ENCODE measurements at regions of chr17 and their contacts with region 1.

Region 1: DNA sequence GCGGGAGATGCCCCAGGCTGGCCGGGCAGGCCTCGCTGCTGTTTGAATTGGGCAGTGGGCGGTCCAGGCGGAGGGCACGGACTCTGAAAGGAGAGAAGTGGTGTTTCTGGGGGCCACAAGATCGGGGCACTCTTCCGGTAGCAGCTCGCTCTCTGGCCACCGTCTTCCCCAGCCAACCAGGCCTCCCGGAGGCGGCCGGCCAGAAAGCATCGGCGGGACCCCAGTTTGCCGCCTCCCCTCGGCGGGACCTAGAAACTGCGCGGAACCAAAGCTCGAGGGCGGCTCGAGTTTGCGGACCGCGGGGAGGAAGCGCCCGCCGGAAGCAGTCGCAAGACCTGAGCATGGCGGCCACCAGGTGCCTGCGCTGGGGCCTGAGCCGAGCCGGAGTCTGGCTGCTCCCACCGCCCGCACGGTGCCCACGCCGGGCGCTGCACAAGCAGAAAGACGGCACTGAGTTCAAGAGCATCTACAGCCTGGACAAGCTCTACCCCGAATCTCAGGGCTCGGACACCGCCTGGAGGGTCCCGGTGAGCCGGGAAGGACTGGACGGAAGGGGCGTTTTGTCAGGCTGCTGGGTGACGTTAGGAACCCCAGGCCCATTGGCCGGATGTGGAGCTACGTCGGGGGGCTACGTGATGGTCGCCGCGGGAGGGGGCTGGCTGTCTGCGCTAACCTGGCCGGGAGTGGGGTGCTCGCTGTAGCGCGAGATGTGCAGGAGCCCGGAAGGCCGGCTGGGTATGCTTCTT is at the start of gene MRPL58:
- DNase-seq: peak; percentile 94
- CTCF ChIP-seq: peak; percentile 39

Region 2: GRCh38 chr17:74987418-74987908 is 25.1 kb before region 1 on chr17 and contains the start of gene CDR2L:
- CTCF ChIA-PET with region 1: interaction called, 11 read pairs
- POLR2A ChIA-PET with region 1: no interaction called
- DNase-seq: peak; percentile 94
- CTCF ChIP-seq: no peak

Region 3: DNA sequence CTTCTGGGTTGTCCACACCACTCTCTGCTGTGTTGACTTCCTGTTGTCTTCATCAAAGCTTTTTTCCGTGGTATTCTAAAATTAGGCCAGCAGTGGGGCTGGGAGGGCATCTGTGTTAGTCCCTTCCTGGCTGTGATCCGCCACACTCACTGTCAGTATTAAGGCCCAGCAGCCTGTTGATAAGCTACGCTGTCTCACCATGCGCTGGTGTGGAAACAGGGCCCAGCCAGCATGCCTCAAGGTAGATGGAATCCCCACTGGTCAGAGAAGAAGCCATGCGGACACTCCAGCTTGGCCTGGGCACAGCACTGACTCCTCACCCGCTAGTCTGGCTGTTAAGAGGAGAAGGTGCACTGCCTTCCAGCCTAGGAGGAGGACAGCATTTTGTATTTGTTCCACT is 13.7 kb before region 1 on chr17:
- CTCF ChIA-PET with region 1: interaction called, 28 read pairs
- POLR2A ChIA-PET with region 1: interaction called, 4 read pairs
- DNase-seq: no peak
- CTCF ChIP-seq: no peak

Region 4: GRCh38 chr17:75024686-75025397 is 12.3 kb after region 1 on chr17:
- CTCF ChIA-PET with region 1: interaction called, 18 read pairs
- POLR2A ChIA-PET with region 1: no interaction called
- DNase-seq: no peak
- CTCF ChIP-seq: no peak

Region 5: DNA sequence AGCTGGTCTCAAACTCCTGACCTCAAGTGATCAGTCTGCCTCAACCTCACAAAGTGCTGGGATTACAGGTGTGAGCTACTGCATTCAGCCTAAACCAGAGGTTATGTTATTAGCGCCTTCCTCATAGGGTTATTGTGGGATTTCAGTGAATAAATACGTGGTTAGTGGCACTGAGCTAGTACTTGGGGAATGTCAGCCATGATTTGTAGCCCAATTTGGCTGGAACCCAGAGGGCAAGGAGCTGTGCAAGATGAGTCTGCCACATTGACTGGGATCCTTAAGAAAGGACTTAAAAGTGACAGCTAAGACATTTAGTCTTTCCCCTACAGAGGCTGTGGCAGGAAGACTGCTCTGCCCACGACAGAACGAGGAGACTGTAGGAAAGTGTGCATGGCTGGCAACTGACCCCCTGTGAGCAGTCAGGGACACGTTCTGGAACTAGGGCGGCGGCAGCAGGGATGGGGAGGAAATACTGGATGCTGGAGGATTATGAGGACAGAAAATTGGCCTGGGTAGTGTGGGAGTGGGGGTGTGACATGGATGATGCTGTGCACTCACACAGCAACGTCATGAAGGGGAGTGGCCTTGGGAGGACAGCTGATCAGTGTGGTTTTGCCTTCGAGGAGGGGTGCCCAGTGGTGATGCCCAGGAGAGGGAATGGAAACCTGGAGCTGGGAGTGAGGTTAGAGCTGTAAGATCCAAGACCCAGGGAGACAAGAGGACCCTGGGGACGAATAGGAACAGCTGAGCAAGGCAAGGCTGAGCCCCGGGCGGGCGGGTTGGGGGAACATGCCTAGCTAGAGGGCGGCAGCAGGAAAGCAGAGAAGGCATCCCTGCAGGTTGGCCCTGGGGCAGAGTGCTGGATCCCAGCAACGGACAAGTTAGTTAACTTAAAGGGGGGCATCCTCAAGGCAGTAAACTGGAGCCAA is 19.7 kb after region 1 on chr17:
- CTCF ChIA-PET with region 1: interaction called, 19 read pairs
- POLR2A ChIA-PET with region 1: interaction called, 5 read pairs
- DNase-seq: peak; percentile 77
- CTCF ChIP-seq: no peak

Measured in GM10248 (cell line).